ENCODE measurements at regions of chr5 and their contacts with region 1.

Region 1: DNA sequence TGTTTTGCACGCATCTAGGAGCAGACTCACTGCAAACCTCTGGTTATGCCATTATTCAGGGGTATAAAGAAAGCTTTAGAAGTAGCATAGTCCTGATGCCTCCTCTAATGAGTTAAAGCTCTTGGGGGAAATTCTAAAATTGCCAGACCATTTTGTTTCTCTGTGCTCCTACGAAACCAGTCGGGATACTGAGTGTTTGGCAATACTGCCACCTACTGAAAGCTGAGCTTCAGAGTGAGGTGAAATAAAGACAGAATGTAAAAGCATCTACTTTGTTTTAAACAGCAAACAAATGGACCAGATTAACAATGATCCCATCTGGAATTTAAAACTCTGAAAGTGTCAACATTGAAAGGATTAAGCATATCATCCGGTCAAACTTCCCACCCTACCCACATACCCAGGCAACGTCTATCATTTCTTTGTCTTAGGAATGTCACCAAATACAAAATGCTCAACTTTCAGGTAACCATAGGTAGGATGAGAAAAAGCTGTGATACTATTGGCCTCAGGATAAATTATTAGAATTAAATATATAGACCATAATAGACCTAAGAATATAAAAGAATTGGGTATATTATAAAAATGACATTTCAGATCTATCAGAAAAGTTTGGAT is 77.8 kb upstream of the SHISAL2B start:
- DNase-seq: no peak
- H3K4me3 Mint-ChIP-seq: no peak overlapping the region
- H3K27ac Mint-ChIP-seq: no peak overlapping the region
- H3K4me1 Mint-ChIP-seq: no peaks in the 10 kb centered on the region
- H3K27me3 Mint-ChIP-seq: peaks cover 11% of the 10 kb centered on the region

Region 2: GRCh38 chr5:64229163-64229774 is 383.2 kb before region 1 on chr5:
- CTCF ChIA-PET with region 1: interaction called, 11 read pairs
- POLR2A ChIA-PET with region 1: no interaction called
- intact Hi-C with region 1: loop called (anchors 2 kb)
- DNase-seq: no peak
- H3K4me3 Mint-ChIP-seq: no peak overlapping the region
- H3K27ac Mint-ChIP-seq: no peak overlapping the region
- H3K4me1 Mint-ChIP-seq: no peaks in the 10 kb centered on the region
- H3K27me3 Mint-ChIP-seq: no peaks in the 10 kb centered on the region

Measured in activated CD4-positive, alpha-beta memory T cell treated with anti-CD3 and anti-CD28 coated beads for 36 hours (primary cell).